ENCODE measurements at regions of chr1 and their contacts with region 1.

Region 1: GRCh38 chr1:176017722-176018121 is 189.4 kb downstream of the COP1 start:
- DNase-seq: no peak
- H3K4me3 ChIP-seq: no peak overlapping the region
- H3K27ac ChIP-seq: no peak overlapping the region
- H3K4me1 ChIP-seq: no peaks in the 10 kb centered on the region
- H3K27me3 ChIP-seq: no peaks in the 10 kb centered on the region
- CTCF ChIP-seq: no peak
- POLR2A ChIP-seq: no peak

Region 2: DNA sequence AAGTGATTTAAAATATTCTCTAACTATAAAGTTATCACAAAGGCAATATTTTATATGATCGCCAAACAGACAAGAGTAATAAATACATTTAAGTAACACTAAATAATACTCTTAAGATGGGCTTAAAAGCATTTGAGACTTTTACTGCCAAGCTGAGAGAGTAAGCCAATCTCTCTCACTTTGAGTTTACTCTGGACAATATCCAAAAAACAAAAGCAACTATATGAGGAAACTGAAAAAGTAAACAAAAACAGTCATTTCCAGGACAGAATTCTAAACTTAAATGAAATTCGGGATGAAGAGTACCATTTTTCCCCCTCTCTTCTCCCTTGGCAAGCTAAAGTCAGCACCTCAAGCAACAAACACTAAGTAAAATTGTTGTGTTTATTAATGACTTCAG is 16.2 kb after region 1 on chr1:
- CTCF ChIA-PET with region 1: interaction called, 3 read pairs
- POLR2A ChIA-PET with region 1: no interaction called
- dilution Hi-C with region 1: no loop called
- intact Hi-C with region 1: loop called (anchors 2 kb)
- DNase-seq: peak; percentile 64
- H3K4me3 ChIP-seq: peak overlapping the region in 1 of 3 experiments; percentile 41
- H3K27ac ChIP-seq: peak overlapping the region; percentile 43
- H3K4me1 ChIP-seq: peaks cover 19% of the 10 kb centered on the region
- H3K27me3 ChIP-seq: no peaks in the 10 kb centered on the region
- CTCF ChIP-seq: no peak
- POLR2A ChIP-seq: no peak

Measured in endothelial cell of umbilical vein (primary cell).